ENCODE measurements at regions of chr11 and their contacts with region 1.

Region 1: GRCh38 chr11:2196970-2197770 is 25.6 kb upstream of the TH start:
- DNase-seq: peak; percentile 59 to 93 (median 82)
- ATAC-seq: peak; percentile 67 to 91 (median 88)
- H3K4me3 ChIP-seq: no peak overlapping the region
- H3K27ac ChIP-seq: no peak overlapping the region
- H3K4me1 ChIP-seq: peaks cover 0 to 7% (median 5%) of the 10 kb centered on the region in 3 donors
- H3K27me3 ChIP-seq: no peaks in the 10 kb centered on the region
- CTCF ChIP-seq: peak; percentile 62 to 81 (median 72)

Region 2: DNA sequence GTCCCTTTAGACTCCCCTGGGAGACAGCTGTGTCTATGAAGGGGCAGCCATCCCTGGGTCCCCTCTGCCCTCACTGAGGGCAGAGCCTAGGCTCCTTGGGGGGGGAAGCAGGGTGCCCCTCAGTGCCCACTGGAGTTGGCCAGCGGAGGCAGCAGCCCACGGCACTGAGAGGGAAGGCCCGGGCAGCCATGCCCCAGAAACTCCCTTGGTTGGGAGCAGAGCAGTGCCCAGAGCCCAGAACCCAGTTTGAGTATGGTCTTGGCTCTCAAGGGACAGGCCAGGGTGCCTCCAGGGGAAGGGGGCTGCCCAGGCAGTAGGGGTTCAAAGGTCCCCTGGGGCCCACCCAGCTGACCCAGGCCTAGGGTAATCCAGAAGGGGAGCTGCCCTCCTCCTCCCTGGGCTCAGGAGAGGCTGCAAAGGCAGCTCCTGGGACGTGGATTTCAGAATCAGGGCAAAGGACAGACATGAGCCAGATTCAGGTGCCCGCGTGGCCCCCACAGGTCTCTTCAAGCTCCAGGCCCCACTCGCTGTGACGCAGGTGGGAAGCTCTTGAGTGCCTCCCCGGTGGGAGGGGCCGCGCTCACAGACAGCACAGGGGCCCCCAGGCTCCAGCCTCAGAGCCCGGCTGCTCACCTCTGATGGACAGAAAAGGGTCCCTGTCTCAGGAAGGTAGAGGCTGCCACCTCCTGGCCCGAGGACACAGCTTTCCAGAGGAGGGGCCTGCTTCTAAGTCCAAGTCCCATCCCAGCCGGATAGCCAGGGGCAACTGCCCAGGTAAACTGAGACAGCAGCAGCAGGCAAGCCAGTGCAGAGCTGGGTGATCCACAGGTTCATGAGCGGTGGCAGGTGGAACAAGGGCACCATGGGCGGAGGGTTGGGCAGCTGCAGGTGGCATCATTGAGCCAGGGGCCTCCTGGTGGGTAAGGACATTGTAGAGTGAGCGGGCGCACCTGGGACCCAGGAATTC is 101.9 kb after region 1 on chr11:
- intact Hi-C with region 1: loop called in 2 of 3 experiments (anchors 2 to 5 kb)
- DNase-seq: peak in 3 of 6 donors; percentile 22 to 73 (median 61)
- ATAC-seq: peak in 3 of 4 donors; percentile 35 to 65 (median 63)
- H3K4me3 ChIP-seq: no peak overlapping the region
- H3K27ac ChIP-seq: no peak overlapping the region
- H3K4me1 ChIP-seq: peaks cover 0 to 14% (median 10%) of the 10 kb centered on the region in 3 donors
- H3K27me3 ChIP-seq: no peaks in the 10 kb centered on the region
- CTCF ChIP-seq: peak in 1 of 4 donors; percentile 24

Region 3: DNA sequence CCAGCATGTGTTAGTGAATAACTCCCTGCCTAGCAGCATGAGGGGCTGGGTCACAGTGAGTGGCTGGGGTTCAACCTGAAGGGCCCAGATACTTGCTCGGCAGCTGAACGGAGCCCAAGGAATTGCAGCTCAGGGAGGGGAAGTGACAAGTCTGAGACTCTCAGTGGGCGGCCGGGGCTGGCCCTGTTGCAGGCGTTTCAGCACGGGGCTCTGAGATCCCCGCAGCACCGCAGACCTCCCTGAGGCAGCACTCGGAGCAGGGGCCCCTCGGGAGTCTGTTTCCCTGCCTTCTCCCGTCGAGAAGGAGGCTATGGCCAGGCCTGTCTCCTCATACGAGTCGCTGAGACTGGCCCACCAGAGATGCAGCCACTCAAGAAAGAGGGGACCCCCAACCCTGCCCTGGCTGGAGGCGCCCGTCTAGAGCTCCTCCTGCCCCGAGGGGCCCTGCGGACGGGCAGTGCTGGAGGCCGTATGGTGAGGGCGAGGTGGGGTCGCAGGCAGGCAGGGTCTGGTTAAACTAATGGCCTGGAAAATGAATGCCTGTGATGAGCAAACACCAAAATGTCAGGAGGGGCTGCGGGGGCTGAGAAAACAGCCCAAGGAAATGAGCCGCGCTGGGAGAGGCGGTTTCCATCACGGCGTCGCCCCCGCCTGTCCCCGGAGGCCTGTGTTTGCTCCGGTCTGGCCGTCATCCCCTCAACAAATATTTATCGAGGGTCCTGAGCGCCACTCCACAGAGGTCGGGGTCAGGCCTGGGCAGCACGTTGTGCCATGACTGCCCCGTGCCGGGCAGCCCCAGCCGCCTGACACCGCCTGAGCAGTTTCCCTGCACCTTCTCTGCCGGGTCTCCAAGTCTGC is 212.7 kb after region 1 on chr11:
- intact Hi-C with region 1: loop called in 2 of 3 experiments (anchors 2 to 10 kb)
- DNase-seq: no peak
- ATAC-seq: peak in 2 of 4 donors; percentile 17 to 23
- H3K4me3 ChIP-seq: no peak overlapping the region
- H3K27ac ChIP-seq: no peak overlapping the region
- H3K4me1 ChIP-seq: no peaks in the 10 kb centered on the region
- H3K27me3 ChIP-seq: no peaks in the 10 kb centered on the region
- CTCF ChIP-seq: no peak

Region 4: GRCh38 chr11:2420502-2421225 is 223.5 kb after region 1 on chr11:
- intact Hi-C with region 1: loop called in 2 of 3 experiments (anchors 5 to 10 kb)
- DNase-seq: peak; percentile 59 to 92 (median 80)
- ATAC-seq: peak; percentile 93 to 97 (median 95)
- H3K4me3 ChIP-seq: no peak overlapping the region
- H3K27ac ChIP-seq: no peak overlapping the region
- H3K4me1 ChIP-seq: no peaks in the 10 kb centered on the region
- H3K27me3 ChIP-seq: no peaks in the 10 kb centered on the region
- CTCF ChIP-seq: peak; percentile 77 to 96 (median 92)

Region 5: DNA sequence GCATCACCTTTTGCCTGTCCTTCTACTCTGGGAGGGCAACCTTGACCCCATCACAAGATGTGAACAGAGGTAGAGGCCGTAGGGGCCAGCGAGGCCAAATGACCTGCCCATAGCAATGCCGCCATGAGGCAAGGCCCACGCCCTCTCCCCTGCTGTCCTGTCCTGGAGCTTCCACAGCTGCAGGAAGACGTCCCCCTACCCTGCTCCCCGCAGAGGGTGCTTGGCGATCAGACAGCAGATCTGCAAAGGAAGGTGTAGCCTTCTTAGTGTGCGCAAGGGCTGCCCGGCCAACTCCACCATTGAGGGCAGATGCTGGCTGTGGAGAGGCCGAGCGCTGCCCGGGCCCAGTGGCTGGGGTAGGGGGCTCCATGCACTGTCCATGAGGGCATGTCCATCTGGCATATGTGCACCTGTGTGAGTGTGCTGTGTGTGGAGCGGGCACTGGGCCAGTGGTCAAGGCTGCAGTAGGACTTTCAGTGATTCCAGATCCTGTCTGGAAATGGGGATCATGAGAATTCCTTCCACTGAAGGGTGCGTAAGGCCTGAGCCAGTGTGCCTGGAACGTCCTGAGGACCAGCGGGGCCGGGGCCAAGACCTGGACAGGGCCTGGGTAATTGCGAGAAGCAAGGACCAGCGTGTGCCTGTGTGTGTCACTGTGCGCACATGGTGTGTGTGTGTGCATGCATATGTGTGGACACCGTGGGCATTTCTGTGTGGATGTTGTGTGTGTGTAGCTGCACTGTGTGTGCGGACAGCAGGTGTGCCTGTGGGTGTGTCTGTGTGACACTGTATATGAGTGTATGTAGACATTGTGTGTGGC is 236.1 kb after region 1 on chr11:
- intact Hi-C with region 1: no loop called
- DNase-seq: peak in 3 of 6 donors; percentile 21 to 52 (median 41)
- ATAC-seq: peak in 1 of 4 donors; percentile 8
- H3K4me3 ChIP-seq: no peak overlapping the region
- H3K27ac ChIP-seq: no peak overlapping the region
- H3K4me1 ChIP-seq: no peaks in the 10 kb centered on the region
- H3K27me3 ChIP-seq: no peaks in the 10 kb centered on the region
- CTCF ChIP-seq: no peak